ENCODE measurements at regions of chr11 and their contacts with region 1.

Region 1: DNA sequence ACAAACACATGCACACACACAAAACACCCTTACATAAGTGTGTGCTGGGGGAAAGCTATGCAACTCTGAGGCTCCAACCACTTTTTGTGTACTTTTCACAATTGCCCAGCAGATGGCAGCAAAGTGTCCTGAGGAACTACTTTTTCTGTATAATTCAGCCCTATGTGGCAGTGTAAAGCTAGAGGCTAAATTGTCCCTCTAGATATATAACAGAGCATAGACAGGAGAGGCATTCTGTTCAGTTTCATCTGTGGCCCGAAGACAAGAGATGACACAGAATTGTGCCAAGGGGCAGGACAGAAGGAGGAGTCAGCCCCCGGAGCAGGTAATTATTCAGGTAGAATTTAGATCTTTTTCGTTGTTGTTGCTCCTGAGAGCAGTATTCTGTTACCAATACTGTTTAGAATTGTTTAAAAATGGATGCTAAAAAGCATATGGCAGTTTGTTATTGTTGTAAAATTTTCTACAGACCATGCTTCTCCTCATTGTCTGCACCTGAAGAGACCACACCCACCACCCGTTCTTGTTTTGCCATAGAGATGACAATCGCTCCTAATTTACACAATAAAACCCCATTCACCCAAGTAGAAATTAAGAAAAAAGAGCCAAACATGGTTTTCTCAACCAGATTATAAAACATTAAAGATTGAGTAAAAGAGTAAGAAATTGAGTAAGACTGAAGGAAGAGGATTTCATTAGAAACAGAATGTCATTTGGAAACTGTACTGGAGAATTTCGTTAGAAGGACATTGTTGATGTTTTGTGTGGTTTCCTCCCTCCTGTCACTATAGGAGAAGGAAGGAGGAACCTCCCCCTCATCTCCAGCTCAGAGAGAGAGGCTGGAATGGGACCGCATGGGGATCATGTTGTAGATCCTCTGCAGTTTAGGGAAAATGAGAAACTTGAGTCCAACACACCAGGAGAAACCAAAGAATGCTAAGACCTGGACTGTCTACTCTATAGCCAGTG is 14.5 kb upstream of the MS4A7 start:
- H3K4me3 Mint-ChIP-seq: peak overlapping the region; percentile 79
- H3K27ac Mint-ChIP-seq: peak overlapping the region; percentile 99
- H3K4me1 Mint-ChIP-seq: peaks cover 54% of the 10 kb centered on the region
- H3K27me3 Mint-ChIP-seq: no peaks in the 10 kb centered on the region

Region 2: GRCh38 chr11:60334005-60334620 is 29.7 kb before region 1 on chr11:
- intact Hi-C with region 1: no loop called
- H3K4me3 Mint-ChIP-seq: no peak overlapping the region
- H3K27ac Mint-ChIP-seq: peak overlapping the region; percentile 87
- H3K4me1 Mint-ChIP-seq: peaks cover 58% of the 10 kb centered on the region
- H3K27me3 Mint-ChIP-seq: no peaks in the 10 kb centered on the region

Region 3: GRCh38 chr11:60378354-60378753 is 14.5 kb after region 1 on chr11 and contains the start of gene MS4A7:
- intact Hi-C with region 1: loop called (anchors 1 kb)
- H3K4me3 Mint-ChIP-seq: peak within 1 kb of the TSS; percentile 96
- H3K27ac Mint-ChIP-seq: peak within 1 kb of the TSS; percentile 93
- H3K4me1 Mint-ChIP-seq: peaks cover 79% of the 10 kb centered on the region
- H3K27me3 Mint-ChIP-seq: no peaks in the 10 kb centered on the region

Region 4: DNA sequence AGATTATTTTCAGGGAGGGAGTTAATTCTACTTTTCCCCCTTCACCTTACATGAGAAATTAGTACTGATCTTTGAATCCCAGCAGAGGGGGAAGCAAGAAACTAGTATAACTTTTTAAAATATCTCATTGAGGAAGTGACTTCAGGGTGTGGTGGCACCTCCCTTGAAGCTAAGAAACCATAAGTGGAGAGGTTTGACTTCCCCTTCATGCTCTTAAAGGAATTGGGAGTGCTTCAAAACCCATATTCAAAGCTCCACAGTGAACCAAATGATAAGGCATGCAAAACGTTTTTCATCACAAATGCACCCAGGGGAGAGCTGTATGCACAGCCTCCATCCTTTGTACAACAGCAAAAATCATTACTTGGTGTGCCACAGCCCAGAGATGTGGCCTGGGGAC is 33.0 kb after region 1 on chr11:
- intact Hi-C with region 1: loop called (anchors 1 kb)
- H3K4me3 Mint-ChIP-seq: no peak overlapping the region
- H3K27ac Mint-ChIP-seq: peak overlapping the region; percentile 92
- H3K4me1 Mint-ChIP-seq: peaks cover 62% of the 10 kb centered on the region
- H3K27me3 Mint-ChIP-seq: no peaks in the 10 kb centered on the region

Region 5: DNA sequence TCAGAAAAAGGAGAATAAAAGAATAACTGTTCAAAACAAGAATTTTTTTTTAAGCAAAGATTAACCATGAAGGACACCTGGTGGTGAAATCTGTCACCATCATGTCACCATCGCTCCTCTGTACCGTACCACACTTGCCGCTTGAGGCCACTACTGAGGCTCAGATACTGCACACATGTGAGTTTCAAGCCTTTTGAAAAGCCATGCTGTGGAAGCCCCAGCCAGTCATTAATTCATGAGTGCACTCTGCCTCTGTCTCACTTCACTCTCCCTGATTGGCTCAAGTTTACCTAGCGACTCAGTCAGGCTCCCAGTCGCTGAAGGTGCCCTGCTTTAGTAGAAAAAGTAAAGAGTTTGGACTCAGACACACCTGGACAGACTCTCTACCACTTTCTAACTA is 122.2 kb after region 1 on chr11:
- intact Hi-C with region 1: loop called (anchors 1 kb)
- H3K4me3 Mint-ChIP-seq: no peak overlapping the region
- H3K27ac Mint-ChIP-seq: peak overlapping the region; percentile 35
- H3K4me1 Mint-ChIP-seq: peaks cover 34% of the 10 kb centered on the region
- H3K27me3 Mint-ChIP-seq: peaks cover 1% of the 10 kb centered on the region

Region 6: GRCh38 chr11:60615497-60615896 is 251.7 kb after region 1 on chr11:
- intact Hi-C with region 1: loop called (anchors 2 kb)
- H3K4me3 Mint-ChIP-seq: no peak overlapping the region
- H3K27ac Mint-ChIP-seq: no peak overlapping the region
- H3K4me1 Mint-ChIP-seq: peaks cover 5% of the 10 kb centered on the region
- H3K27me3 Mint-ChIP-seq: no peaks in the 10 kb centered on the region

Region 7: DNA sequence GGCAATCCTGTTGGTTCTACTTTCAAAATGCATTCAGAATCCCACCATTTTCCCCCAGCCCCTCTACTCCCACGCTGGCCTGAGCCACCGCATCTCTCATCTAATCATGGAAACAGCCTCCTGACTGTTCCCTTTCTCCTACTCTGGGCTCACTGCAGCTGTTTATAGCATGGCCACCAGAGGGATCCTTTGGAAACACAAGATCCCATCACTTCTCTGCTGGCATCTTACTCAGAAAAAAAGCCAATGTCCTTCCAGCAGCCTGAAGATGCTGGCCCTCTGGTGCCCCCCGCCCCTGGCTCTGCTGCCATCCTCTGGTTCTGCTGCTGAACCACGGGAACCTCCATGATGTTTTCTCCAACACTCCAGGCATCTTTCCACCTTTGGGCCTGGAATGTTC is 346.7 kb after region 1 on chr11:
- intact Hi-C with region 1: no loop called
- H3K4me3 Mint-ChIP-seq: no peak overlapping the region
- H3K27ac Mint-ChIP-seq: no peak overlapping the region
- H3K4me1 Mint-ChIP-seq: no peaks in the 10 kb centered on the region
- H3K27me3 Mint-ChIP-seq: peaks cover 1% of the 10 kb centered on the region

Measured in dendritic cell treated with granulocyte-macrophage colony-stimulating factor and Interleukin-4, amounts not matched to agents 40 ng/mL and 50 ng/mL, for 4 days (primary cell).